Aorta (tissue), 5 donors: ENCODE measurements at regions of chr7 and their contacts with region 1.

Region 1: DNA sequence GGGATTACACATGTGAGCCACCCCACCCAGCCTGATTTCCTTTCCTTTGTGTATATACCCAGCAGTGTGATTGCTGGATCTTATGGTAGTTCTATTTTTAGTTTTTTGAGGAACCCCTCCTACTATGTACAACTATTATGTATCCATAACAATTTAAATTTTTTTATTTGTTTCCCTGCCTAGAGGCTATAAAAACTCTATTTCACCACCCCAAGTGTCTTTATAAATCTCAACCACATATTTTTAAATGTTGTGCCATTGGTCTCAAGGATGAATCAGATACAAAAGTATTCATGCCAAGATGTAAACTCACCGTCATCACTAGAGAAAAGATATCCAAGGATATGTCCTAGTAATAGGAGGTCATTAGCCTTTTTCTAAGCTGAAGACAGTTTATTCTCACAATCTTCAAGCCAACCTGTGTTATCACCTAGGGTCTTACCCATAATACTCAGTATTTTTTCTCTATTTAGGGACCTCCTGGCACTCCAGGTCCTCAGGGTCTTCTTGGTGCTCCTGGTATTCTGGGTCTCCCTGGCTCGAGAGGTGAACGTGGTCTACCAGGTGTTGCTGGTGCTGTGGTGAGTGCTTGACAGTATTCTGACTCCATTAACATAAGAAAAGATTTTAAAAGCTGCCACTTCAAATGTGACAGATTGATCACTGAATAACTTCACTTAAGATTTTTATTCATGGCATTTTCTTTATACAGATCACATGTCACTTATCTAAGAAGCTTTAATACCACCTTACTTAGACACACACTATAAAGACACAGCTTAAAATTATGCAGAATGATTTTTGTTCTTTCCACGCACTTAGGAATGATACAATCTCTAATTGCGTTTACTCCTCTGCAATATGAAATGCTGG is 29.4 kb downstream of the COL1A2 start:
- DNase-seq: no peak
- ATAC-seq: no peak
- H3K4me3 ChIP-seq: no peak overlapping the region
- H3K27ac ChIP-seq: peak overlapping the region in 1 of 2 donors; percentile 87
- H3K4me1 ChIP-seq: no peaks in the 10 kb centered on the region
- H3K27me3 ChIP-seq: no peaks in the 10 kb centered on the region

Region 2: DNA sequence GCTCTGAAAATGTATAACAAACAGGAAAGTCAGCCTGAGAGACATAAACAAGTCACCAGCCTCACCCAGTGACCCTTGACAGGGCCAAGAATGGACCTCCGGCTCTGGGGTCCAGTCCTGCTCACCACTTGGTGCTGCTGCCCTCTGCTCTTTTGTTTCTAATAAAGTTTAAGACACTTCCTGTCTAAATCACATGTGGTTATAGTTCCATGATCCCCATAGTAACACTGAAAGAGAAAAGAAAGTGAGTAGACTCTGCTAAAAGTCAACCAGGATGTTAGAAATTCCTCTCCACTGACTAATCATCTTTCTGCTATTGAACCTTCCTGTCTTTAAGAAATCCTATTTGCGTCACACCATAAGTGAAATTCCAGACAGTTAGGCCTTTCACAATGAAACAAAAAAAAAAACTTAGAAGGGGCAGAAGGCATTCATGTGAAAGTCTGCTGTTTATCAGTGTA is 240.8 kb before region 1 on chr7:
- intact Hi-C with region 1: loop called in 1 of 2 experiments (anchors 10 kb)
- DNase-seq: peak; percentile 51 to 66
- ATAC-seq: peak; percentile 87
- H3K4me3 ChIP-seq: no peak overlapping the region
- H3K27ac ChIP-seq: peak overlapping the region in 1 of 2 donors; percentile 23
- H3K4me1 ChIP-seq: no peaks in the 10 kb centered on the region
- H3K27me3 ChIP-seq: no peaks in the 10 kb centered on the region